CD4-positive, alpha-beta T cell (primary cell): ENCODE measurements at regions of chr5 and their contacts with region 1.

Region 1: GRCh38 chr5:131671994-131672655 is 37.1 kb upstream of the RAPGEF6 start:
- DNase-seq: no peak
- ATAC-seq: no peak
- H3K4me3 ChIP-seq: no peak overlapping the region
- H3K4me3 Mint-ChIP-seq: no peak overlapping the region
- H3K27ac ChIP-seq: no peak overlapping the region
- H3K27ac Mint-ChIP-seq: no peak overlapping the region
- H3K4me1 ChIP-seq: no peaks in the 10 kb centered on the region
- H3K4me1 Mint-ChIP-seq: no peaks in the 10 kb centered on the region
- H3K27me3 ChIP-seq: no peaks in the 10 kb centered on the region
- H3K27me3 Mint-ChIP-seq: no peaks in the 10 kb centered on the region
- CTCF ChIP-seq: no peak

Region 2: DNA sequence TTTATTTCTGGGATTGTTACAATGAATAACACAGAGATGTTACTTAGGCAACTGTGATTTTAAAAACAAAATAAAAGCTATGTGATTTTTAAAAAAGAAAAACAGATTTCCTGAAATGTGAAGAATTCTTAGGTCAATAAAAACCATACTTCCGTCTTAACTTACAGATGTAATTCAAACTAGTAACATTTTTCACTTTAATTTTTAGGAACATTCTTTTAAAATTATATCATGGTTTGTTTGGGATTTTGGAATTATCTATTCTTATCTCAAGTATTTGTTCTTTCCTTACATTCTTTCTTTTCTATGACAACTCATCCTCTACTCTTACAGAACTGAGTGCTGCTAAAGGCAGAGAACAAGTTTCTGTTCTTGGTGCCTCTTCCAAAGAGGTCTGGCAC is 196.6 kb before region 1 on chr5:
- CTCF ChIA-PET with region 1: no interaction called
- POLR2A ChIA-PET with region 1: no interaction called
- intact Hi-C with region 1: no loop called
- DNase-seq: no peak
- ATAC-seq: no peak
- H3K4me3 ChIP-seq: no peak overlapping the region
- H3K4me3 Mint-ChIP-seq: no peak overlapping the region
- H3K27ac ChIP-seq: no peak overlapping the region
- H3K27ac Mint-ChIP-seq: peak overlapping the region; percentile 69
- H3K4me1 ChIP-seq: peaks cover 4% of the 10 kb centered on the region
- H3K4me1 Mint-ChIP-seq: peaks cover 64% of the 10 kb centered on the region
- H3K27me3 ChIP-seq: no peaks in the 10 kb centered on the region
- H3K27me3 Mint-ChIP-seq: no peaks in the 10 kb centered on the region
- CTCF ChIP-seq: no peak

Region 3: DNA sequence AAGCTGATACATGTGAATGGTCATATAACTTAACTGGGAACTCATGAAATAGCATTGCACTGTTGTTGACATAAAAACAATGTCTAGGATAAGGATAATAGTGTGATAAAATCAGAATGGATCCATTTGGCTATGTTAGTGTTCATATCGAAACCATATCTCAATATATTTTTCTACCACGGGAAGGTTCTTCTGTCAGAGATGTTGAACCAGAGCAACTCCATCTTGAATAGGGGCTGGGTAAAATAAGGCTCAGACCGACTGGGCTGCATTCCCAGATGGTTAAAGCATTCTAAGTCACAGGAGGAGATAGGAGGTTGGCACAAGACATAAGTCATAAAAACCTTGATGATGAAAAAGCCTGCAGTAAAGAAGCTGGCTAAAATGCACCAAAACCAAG is 68.4 kb after region 1 on chr5:
- CTCF ChIA-PET with region 1: no interaction called
- POLR2A ChIA-PET with region 1: no interaction called
- intact Hi-C with region 1: loop called in 1 of 2 experiments (anchors 5 kb)
- DNase-seq: no peak
- ATAC-seq: no peak
- H3K4me3 ChIP-seq: no peak overlapping the region
- H3K4me3 Mint-ChIP-seq: no peak overlapping the region
- H3K27ac ChIP-seq: no peak overlapping the region
- H3K27ac Mint-ChIP-seq: no peak overlapping the region
- H3K4me1 ChIP-seq: no peaks in the 10 kb centered on the region
- H3K4me1 Mint-ChIP-seq: peaks cover 11% of the 10 kb centered on the region
- H3K27me3 ChIP-seq: no peaks in the 10 kb centered on the region
- H3K27me3 Mint-ChIP-seq: no peaks in the 10 kb centered on the region
- CTCF ChIP-seq: no peak